OCI-LY7 (cell line): ENCODE measurements at regions of chr20 and their contacts with region 1.

Region 1: DNA sequence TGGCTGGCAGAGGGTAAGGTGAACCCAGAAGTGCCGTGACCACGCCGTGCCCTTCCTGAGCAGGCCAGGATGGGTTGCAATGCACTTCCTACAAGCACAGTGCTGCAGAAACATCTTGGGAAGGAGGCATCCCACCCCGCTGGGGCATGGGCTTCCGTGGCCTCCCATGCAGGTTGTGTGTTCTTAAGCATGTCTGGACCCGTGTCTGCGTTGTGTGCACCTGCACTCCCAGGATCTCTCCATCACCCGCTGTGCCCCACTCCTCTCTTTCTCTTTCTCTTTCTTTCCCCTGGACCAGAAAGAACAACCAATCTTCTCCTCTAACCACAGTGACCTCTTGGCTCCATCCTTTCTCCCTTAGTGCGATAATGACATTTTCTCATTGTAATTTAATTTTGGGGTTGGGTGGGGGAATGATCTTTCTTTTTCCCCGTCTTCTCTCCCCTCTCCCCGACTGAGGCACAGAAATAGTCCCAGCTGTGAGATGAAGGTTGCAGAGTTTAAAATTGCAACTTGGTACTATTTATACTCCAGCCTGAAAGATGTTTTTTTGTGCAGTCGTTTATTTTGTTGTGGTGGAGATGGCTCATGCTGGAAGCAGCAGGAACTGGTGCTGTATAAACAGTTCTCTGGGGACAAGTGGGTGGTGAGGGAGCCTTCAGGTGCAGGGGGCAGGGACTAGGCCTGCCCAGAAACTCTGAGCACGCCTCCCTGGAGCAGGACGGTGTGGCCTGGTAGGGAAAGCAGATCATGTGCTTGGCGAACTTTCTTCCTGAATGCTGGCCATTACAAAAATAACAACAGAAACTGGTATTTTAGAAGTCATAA is 20.5 kb downstream of the BCAS4 start:
- DNase-seq: peak; percentile 92
- H3K4me3 ChIP-seq: peak overlapping the region; percentile 55
- H3K27ac ChIP-seq: peak overlapping the region; percentile 97
- H3K4me1 ChIP-seq: peaks cover 100% of the 10 kb centered on the region
- CTCF ChIP-seq: no peak

Region 2: GRCh38 chr20:50790651-50791277 is 24.6 kb before region 1 on chr20:
- CTCF ChIA-PET with region 1: interaction called, 4 read pairs
- POLR2A ChIA-PET with region 1: interaction called, 230 read pairs
- intact Hi-C with region 1: loop called (anchors 1 kb)
- DNase-seq: peak; percentile 91
- H3K4me3 ChIP-seq: no peak overlapping the region
- H3K27ac ChIP-seq: peak overlapping the region; percentile 46
- H3K4me1 ChIP-seq: peaks cover 42% of the 10 kb centered on the region
- CTCF ChIP-seq: peak; percentile 82

Region 3: DNA sequence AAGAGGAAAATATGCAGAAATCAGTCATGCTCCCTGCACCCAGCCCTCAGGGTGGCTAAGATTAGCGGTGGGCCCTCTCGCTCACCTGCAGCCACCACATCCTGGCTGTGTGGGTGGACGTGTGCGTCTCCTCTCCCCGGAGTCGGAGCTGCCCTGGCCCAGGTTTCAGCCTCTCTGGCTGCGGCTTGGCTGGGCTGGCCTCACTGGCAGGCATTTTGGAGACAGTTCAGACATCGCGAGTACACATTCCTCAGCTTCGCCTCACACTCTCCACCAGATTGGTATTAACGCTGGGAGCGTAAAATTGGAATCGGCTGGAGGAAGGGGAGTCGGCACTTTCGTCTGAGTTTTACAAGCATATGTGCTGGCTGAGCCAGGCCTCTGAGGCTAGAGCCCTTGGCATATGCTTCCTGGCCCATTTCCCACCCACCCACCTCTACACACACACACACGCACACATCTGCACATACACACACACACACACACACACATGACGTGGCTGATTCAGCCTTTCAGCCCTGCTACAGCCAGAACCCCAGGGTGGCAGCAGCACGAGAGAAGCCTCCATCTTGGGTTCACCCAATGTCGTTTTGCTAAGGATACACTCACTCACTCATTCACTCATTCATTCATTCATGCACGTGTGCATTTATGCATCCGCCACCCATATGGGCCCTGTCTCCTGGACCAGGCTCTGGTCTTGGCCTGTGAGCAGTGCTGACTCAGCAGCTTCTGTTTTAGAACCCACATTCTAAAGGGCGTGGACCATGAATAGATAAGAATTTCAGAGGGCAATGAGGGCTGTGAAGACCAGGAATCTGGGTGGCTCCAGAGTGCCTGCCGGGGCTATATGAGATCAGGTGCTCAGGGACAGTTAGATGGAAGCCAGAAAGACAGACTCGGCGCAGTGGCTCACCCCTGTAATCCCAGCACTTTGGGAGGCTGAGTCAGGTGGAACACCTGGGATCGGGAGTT is 22.4 kb after region 1 on chr20:
- CTCF ChIA-PET with region 1: no interaction called
- POLR2A ChIA-PET with region 1: no interaction called
- intact Hi-C with region 1: loop called (anchors 1 kb)
- DNase-seq: peak; percentile 86
- H3K4me3 ChIP-seq: peak overlapping the region; percentile 42
- H3K27ac ChIP-seq: peak overlapping the region; percentile 85
- H3K4me1 ChIP-seq: peaks cover 36% of the 10 kb centered on the region
- CTCF ChIP-seq: no peak

Region 4: DNA sequence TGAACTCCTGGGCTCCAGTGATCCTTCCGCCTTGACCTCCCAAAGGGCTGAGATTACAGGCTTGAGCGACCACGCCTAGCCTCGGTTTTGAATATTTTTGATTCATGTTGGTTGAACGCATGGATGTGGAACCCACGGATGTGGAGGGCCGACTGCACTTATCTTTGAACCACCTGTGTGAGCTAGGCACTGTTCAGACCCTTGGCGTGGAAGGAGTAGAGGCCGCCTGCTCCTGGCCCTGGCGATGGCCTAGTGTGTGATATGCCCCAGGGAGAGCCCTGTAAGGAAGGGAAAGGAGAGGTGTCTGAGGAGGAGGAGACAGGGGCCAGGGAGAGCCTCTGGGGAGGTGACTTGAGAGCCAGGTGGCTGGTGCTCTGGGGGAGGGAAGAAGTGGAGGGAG is 43.8 kb after region 1 on chr20:
- CTCF ChIA-PET with region 1: interaction called, 3 read pairs
- POLR2A ChIA-PET with region 1: interaction called, 4 read pairs
- intact Hi-C with region 1: loop called (anchors 2 kb)
- DNase-seq: peak; percentile 81
- H3K4me3 ChIP-seq: no peak overlapping the region
- H3K27ac ChIP-seq: peak overlapping the region; percentile 70
- H3K4me1 ChIP-seq: peaks cover 40% of the 10 kb centered on the region
- CTCF ChIP-seq: no peak

Region 5: DNA sequence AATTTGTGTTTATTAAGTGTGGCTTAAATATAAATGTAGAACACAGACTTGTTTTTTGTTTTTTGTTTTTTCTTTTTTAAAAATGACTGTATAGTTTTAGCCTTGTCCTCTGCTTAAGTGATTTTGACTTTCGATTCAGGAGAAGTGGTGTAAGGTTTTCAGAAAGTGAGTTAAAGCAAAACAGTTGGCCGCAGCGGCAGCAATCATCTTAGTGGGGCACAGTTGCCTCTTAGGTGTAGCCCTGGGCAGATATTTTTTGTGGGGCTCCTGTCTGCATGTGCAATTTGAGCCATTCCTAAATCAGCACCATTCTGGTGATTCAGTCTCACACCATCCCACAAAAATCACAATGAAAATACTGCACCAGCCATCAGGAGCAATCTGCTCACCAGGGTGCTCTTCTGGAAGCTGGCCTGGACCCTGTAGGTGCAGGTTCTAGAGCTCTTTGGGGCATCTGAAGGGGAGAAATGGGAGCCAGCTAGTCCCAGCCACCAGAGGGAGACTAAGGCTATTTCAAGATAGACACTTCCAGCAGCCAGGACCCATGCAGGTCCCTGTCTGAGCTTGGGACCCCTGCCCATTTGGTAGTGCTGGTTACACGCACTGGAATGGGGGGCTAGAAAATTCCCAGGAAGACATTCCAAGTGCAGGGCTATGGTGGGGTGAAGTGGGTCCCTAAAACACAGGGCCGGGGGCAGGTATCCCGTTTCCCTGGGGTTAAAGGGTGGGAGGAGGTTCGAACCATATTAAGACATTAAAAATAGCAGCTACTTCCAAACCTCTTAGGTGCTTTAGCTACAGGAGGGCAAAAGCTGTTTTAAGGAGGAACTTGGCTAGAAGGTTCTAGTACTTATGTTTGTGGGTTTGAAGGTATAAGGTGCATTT is 570.5 kb after region 1 on chr20:
- CTCF ChIA-PET with region 1: no interaction called
- POLR2A ChIA-PET with region 1: no interaction called
- intact Hi-C with region 1: loop called (anchors 5 kb)
- DNase-seq: peak; percentile 74
- H3K4me3 ChIP-seq: peak overlapping the region; percentile 6
- H3K27ac ChIP-seq: peak overlapping the region; percentile 95
- H3K4me1 ChIP-seq: peaks cover 100% of the 10 kb centered on the region
- CTCF ChIP-seq: peak; percentile 82